Left ventricle myocardium superior (tissue), 1 donor: ENCODE measurements at regions of chr15 and their contacts with region 1.

Region 1: GRCh38 chr15:89361451-89362202 is 27.0 kb upstream of the POLG start:
- DNase-seq: peak; percentile 77
- ATAC-seq: peak; percentile 62

Region 2: GRCh38 chr15:89003865-89004725 is 357.5 kb before region 1 on chr15:
- intact Hi-C with region 1: no loop called
- DNase-seq: peak; percentile 71
- ATAC-seq: peak; percentile 86

Region 3: DNA sequence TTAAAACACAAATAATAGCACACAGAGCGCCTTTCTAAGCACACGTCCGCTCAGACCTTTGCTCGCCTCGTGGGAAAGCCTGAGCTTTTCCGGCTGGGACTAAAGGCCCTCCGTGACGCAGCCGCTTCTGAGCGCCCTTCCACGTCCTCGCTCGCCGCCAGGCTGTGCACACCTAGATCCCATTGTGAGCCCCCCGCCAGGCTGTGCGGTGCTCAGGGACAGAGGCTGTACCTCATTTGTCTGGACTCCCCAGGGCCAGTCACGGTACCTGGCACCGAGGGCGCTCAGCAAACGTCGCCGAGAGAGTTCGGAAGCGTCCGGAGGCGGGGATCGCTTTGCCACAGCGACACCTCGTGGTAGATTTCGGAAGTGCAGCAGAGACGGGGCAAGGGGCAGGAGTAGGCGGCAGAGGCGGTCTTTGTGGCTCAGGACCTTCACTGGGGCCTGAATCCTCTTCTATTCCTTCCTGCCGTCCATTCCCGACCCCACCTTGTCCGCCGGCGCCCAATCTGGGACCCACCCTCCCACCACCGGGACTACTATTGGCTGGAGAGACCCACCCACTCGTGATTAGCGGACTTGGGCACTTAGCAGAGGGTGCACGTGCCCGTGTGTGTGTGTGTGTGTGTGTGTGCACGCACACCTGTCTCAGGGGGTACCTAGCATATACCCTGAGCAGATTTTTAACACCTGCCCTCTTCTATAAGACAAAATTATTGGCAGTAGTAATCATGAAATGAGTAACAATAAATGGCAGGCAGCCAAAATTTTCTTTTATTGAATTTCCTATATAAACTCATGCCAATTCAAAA is 69.1 kb after region 1 on chr15:
- intact Hi-C with region 1: loop called (anchors 5 kb)
- DNase-seq: peak; percentile 91
- ATAC-seq: peak; percentile 97